ENCODE measurements at regions of chr11 and their contacts with region 1.

Region 1: GRCh38 chr11:64358907-64359711 is at the start of gene RPS6KA4:
- DNase-seq: peak; percentile 93
- CTCF ChIP-seq: no peak

Region 2: GRCh38 chr11:64132191-64132771 is 226.8 kb before region 1 on chr11:
- CTCF ChIA-PET with region 1: no interaction called
- POLR2A ChIA-PET with region 1: no interaction called
- DNase-seq: no peak
- CTCF ChIP-seq: no peak

Region 3: GRCh38 chr11:64341851-64342791 is 17.0 kb before region 1 on chr11:
- CTCF ChIA-PET with region 1: interaction called, 81 read pairs
- POLR2A ChIA-PET with region 1: interaction called, 3 read pairs
- DNase-seq: peak; percentile 95
- CTCF ChIP-seq: peak; percentile 28